Activated CD8-positive, alpha-beta memory T cell treated with anti-CD3 and anti-CD28 coated beads, Interleukin-2, amount 10 ng/mL, durations not matched to agents 7 days and 5 days (primary cell): ENCODE measurements at regions of chr2 and their contacts with region 1.

Region 1: GRCh38 chr2:43226558-43226954 is at the start of gene ZFP36L2:
- DNase-seq: peak; percentile 97
- ATAC-seq: peak; percentile 69
- H3K4me3 Mint-ChIP-seq: peak within 1 kb of the TSS; percentile 98
- H3K27ac Mint-ChIP-seq: peak within 1 kb of the TSS; percentile 90
- H3K4me1 Mint-ChIP-seq: peaks cover 33% of the 10 kb centered on the region
- H3K27me3 Mint-ChIP-seq: no peaks in the 10 kb centered on the region
- total RNA-seq, gene ZFP36L2: 118 to 158 TPM

Region 2: GRCh38 chr2:42944779-42945415 is 281.7 kb before region 1 on chr2:
- CTCF ChIA-PET with region 1: interaction called, 57 read pairs
- DNase-seq: no peak
- ATAC-seq: no peak
- H3K4me3 Mint-ChIP-seq: no peak overlapping the region
- H3K27ac Mint-ChIP-seq: no peak overlapping the region
- H3K4me1 Mint-ChIP-seq: peaks cover 4% of the 10 kb centered on the region
- H3K27me3 Mint-ChIP-seq: peaks cover 2% of the 10 kb centered on the region

Region 3: DNA sequence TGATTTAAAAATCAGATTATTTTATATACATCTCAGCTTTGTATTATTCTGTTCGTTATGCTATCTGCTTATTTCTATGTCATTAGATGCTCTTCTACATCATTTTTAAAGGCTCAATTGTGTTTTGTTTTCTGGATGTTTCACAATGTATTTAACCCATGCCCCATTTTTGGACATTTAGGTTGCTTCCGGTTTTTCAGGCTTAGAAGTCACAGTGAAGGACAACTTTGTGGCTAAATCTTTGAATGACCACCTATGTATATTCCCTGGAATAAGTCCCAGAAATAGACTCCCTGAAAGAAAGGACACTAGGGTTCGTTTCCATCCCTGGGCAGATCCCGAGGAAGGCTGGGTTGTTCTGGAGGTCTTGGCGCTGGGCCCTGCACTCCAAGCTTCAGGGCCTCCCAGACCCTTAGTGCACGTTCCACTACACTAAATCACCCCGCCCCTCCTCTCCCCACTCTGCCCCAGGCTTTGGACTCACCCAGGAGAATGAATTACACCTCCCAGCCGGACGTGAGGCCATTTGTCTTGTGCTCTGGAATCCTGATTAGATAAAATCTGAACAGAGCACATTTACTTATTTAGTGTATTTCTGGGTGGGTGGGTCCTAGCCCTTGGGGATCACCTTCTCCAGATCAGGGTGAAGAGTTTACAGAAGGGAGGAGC is 188.4 kb before region 1 on chr2:
- CTCF ChIA-PET with region 1: no interaction called
- DNase-seq: no peak
- ATAC-seq: no peak
- H3K4me3 Mint-ChIP-seq: no peak overlapping the region
- H3K27ac Mint-ChIP-seq: no peak overlapping the region
- H3K4me1 Mint-ChIP-seq: peaks cover 4% of the 10 kb centered on the region
- H3K27me3 Mint-ChIP-seq: peaks cover 13% of the 10 kb centered on the region

Region 4: DNA sequence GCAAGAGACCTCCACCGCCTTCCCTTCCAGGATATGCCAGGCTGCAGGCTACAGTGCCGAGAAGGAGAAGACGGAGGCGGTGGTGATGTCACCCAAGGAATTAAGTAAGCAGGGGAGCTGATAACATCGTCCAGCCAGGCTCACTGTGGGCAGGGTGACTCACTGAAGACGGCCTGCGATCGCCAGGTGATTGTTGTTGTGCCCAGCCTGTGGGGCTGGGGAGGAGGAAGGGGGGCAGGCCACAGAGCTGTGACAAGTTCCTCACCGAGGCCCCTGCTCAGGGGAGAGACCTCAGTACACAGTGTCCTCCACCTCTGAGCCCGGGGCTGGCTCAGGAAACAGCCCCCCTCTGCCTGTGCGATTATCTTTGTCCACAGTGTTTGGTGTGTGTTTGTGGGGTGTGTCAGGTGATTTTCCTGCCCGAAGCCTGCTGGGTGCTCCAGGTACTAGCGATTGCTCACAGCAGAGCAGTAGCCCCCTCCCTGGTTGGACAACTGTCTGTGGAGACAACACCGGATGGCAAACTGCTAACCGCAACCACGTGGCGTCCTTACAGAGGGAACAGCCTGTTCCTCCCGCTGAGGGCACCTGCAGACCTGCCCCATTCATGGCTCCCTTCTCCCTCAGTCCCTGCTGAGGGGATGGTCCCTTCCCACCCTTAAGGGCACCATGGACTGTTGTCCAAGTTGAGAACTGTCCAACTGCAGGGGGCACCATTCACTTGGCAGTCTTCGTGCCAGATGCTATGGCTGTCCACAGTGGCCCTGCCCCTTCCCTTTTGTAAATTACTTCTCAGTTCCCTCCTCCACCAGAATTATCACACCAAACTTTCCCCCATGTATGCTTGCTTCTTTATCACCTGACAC is 95.3 kb before region 1 on chr2:
- CTCF ChIA-PET with region 1: interaction called, 666 read pairs
- DNase-seq: peak; percentile 97
- ATAC-seq: peak; percentile 35
- H3K4me3 Mint-ChIP-seq: peak overlapping the region; percentile 52
- H3K27ac Mint-ChIP-seq: peak overlapping the region; percentile 99
- H3K4me1 Mint-ChIP-seq: peaks cover 89% of the 10 kb centered on the region
- H3K27me3 Mint-ChIP-seq: no peaks in the 10 kb centered on the region

Region 5: GRCh38 chr2:43178602-43179542 is 47.7 kb before region 1 on chr2:
- CTCF ChIA-PET with region 1: interaction called, 255 read pairs
- DNase-seq: no peak
- ATAC-seq: no peak
- H3K4me3 Mint-ChIP-seq: no peak overlapping the region
- H3K27ac Mint-ChIP-seq: peak overlapping the region; percentile 71
- H3K4me1 Mint-ChIP-seq: peaks cover 51% of the 10 kb centered on the region
- H3K27me3 Mint-ChIP-seq: no peaks in the 10 kb centered on the region

Region 6: DNA sequence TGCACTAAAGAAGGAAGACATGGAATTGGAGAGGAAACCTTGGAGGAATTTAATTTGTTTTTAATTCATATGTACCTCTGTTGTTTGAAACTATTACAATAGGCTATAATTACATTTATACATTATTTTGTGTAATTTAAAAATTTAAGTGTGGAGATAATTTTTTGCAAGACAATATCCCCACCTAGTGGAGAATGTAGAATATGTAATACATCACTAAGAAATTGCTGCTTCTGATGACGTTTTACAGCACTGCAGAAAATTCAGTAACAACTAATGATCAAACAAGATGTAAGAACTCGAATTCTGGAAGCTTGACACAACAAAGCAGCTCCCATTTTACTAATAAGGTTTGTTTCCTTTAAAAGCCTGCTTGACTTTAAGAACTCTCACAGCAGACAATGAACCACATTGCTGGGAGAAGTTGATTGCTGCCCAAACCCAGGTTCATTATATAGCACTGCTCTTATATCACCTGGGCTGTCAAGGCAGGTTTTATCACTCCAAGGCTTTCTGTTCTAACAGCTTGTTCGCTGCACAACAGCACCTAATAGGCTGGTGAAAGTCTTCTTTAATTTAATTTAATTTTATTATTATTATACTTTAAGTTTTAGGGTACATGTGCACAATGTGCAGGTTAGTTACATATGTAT is 315.9 kb after region 1 on chr2:
- CTCF ChIA-PET with region 1: interaction called, 30 read pairs
- DNase-seq: no peak
- ATAC-seq: peak; percentile 71
- H3K4me3 Mint-ChIP-seq: no peak overlapping the region
- H3K27ac Mint-ChIP-seq: no peak overlapping the region
- H3K4me1 Mint-ChIP-seq: peaks cover 26% of the 10 kb centered on the region
- H3K27me3 Mint-ChIP-seq: no peaks in the 10 kb centered on the region